ENCODE measurements at regions of chr17 and their contacts with region 1.

Region 1: DNA sequence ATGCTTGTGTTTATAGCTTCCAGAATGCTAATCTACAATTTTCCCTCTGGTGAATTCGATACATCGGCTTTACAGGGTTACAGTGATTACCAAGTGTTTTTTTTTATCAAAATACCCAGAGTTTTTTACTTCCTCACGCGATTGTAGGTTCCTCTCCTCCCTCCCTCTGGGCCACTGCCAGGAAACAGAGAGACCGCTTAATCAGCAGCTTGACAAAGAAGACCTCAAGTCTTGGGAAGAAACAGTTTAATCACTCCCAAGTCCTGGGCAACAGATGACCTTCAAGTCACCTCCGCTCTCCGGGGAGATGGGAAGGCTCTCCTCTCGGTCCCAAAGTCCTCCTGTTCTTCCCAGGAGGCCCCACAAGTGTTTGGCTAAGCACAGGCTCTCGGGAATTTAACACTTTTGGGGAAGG is 23.5 kb downstream of the SMTNL2 start:
- DNase-seq: peak in 1 of 2 donors; percentile 76
- ATAC-seq: no peak
- H3K4me3 ChIP-seq: no peak overlapping the region
- H3K27ac ChIP-seq: peak overlapping the region; percentile 86 to 100 (median 94)
- H3K4me1 ChIP-seq: peaks cover 82 to 83% of the 10 kb centered on the region in 2 donors
- H3K27me3 ChIP-seq: no peaks in the 10 kb centered on the region
- CTCF ChIP-seq: no peak
- POLR2A ChIP-seq: no peak

Region 2: GRCh38 chr17:4310349-4311060 is 297.3 kb before region 1 on chr17:
- in situ Hi-C with region 1: no loop called
- intact Hi-C with region 1: no loop called
- DNase-seq: no peak
- ATAC-seq: no peak
- H3K4me3 ChIP-seq: peak overlapping the region in 1 of 4 donors; percentile 15
- H3K27ac ChIP-seq: peak overlapping the region; percentile 38 to 77 (median 62)
- H3K4me1 ChIP-seq: peaks cover 63% of the 10 kb centered on the region in 2 donors
- H3K27me3 ChIP-seq: no peaks in the 10 kb centered on the region
- CTCF ChIP-seq: no peak
- POLR2A ChIP-seq: no peak

Region 3: GRCh38 chr17:4520894-4521600 is 86.7 kb before region 1 on chr17:
- in situ Hi-C with region 1: no loop called
- intact Hi-C with region 1: no loop called
- DNase-seq: no peak
- ATAC-seq: peak in 1 of 2 donors; percentile 34
- H3K4me3 ChIP-seq: no peak overlapping the region
- H3K27ac ChIP-seq: peak overlapping the region; percentile 53 to 82 (median 74)
- H3K4me1 ChIP-seq: peaks cover 0 to 2% of the 10 kb centered on the region in 2 donors
- H3K27me3 ChIP-seq: no peaks in the 10 kb centered on the region
- CTCF ChIP-seq: no peak
- POLR2A ChIP-seq: no peak

Region 4: GRCh38 chr17:4591529-4591928 is 16.3 kb before region 1 on chr17:
- in situ Hi-C with region 1: no loop called
- intact Hi-C with region 1: loop called (anchors 2 kb)
- DNase-seq: peak; percentile 57 to 80
- ATAC-seq: peak; percentile 30 to 46
- H3K4me3 ChIP-seq: peak overlapping the region in 2 of 4 donors; percentile 26 to 34
- H3K27ac ChIP-seq: peak overlapping the region; percentile 90 to 100 (median 98)
- H3K4me1 ChIP-seq: peaks cover 73 to 79% of the 10 kb centered on the region in 2 donors
- H3K27me3 ChIP-seq: no peaks in the 10 kb centered on the region
- CTCF ChIP-seq: no peak
- POLR2A ChIP-seq: peak; percentile 73 to 86

Measured in gastrocnemius medialis (tissue), 4 donors.